ENCODE measurements at regions of chr15 and their contacts with region 1.

Region 1: DNA sequence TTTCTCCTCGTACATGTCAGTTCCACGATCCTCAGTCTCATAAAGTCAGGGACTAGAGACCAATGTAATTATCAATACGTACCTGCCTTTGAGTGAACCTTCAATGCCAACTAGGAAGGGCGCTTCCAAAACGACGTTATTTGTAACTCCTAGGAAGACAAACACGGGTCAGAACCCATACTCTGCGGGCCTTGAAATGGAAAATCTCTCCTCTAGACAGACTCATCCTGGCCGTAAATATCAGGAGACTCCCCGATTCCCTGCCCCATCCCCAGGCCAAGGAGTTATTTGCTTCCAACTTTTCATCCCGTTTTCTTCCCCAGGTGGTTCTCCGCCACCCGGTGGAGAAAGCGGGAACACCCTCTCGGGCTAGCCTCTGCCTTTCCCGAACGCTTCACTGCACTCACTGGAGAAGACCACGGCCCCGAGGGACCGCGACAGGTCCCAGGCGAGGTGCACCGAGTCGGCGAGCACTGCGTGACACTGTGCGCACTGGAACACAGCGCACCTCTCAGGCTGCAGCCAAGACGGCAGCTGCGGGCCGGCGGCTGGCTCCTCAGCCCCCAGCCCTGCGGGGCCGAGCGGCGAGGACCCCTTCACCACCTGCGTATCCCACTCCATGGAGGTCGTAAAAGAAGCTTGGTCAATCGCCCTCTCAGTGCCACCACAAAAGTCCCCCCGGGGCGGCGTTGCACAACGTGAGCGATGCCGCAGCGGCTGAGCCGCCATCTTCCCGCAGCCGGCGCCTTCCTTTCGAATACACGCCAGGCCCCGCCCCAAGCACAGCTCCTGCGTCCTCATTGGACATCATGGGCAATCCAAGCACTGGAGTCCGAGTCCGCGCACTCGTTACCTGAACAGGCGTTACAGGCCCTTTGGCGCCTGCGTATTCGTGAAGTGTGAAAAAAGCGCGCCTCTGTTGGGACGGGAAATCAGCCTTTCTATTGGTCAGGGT is at the start of gene OIP5:
- DNase-seq: peak; percentile 98
- H3K4me3 Mint-ChIP-seq: peak within 1 kb of the TSS; percentile 94
- H3K27ac Mint-ChIP-seq: peak within 1 kb of the TSS; percentile 95
- H3K4me1 Mint-ChIP-seq: peaks cover 33% of the 10 kb centered on the region
- H3K27me3 Mint-ChIP-seq: no peaks in the 10 kb centered on the region
- total RNA-seq, gene OIP5: 15.6 and 17.6 TPM in 2 replicates

Region 2: GRCh38 chr15:40906091-40906990 is 425.8 kb before region 1 on chr15:
- intact Hi-C with region 1: loop called (anchors 1 kb)
- DNase-seq: peak; percentile 55
- H3K4me3 Mint-ChIP-seq: no peak overlapping the region
- H3K27ac Mint-ChIP-seq: no peak overlapping the region
- H3K4me1 Mint-ChIP-seq: peaks cover 21% of the 10 kb centered on the region
- H3K27me3 Mint-ChIP-seq: no peaks in the 10 kb centered on the region

Region 3: DNA sequence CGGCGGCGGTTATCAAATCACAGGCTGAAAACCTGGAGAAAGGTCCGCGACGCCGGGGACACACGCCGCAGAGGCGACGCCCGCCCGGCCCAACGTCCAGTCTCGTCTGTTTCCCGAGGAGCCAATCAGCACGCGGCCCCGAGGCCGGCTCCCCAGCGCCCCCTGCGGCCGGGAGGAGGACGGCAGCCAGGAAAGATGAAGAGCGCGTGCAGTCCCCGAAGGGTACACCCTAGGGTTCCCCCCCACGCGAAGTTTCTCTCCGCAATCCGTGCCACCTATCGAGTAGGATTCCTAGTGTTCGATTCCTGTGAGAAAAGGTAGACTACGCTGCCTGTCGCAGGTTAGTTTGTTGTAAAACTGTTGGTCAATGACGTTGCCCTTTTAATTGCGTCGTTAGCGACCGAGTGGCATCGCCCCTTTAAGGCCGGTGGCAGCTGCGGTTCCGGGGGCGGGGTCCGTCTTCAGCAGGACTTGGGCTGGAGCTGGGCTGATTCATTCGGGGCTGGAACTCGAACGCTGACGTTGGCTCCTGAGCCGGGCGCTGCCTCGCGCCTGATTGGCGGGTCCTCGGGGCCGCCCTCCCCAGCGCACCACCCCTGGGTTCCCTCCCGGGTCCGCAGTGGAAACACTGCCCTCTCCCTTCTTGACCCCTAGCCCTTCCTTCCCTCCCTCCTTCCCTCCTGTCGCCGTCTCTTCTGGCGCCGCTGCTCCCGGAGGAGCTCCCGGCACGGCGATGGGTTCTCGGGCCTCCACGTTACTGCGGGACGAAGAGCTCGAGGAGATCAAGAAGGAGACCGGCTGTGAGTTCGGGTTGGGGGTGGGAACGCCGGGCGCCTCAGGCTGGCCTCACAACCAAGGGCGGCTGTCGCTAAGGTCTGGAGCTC is 101.2 kb before region 1 on chr15 and contains the starts of genes CHP1 and EXD1:
- intact Hi-C with region 1: loop called (anchors 1 kb)
- DNase-seq: peak; percentile 96
- H3K4me3 Mint-ChIP-seq: peak within 1 kb of the TSS; percentile 92
- H3K27ac Mint-ChIP-seq: peak within 1 kb of the TSS; percentile 89
- H3K4me1 Mint-ChIP-seq: peaks cover 23% of the 10 kb centered on the region
- H3K27me3 Mint-ChIP-seq: no peaks in the 10 kb centered on the region
- total RNA-seq, gene CHP1: 43.5 and 55.2 TPM in 2 replicates
- total RNA-seq, gene EXD1: not detected in 2 replicates

Region 4: DNA sequence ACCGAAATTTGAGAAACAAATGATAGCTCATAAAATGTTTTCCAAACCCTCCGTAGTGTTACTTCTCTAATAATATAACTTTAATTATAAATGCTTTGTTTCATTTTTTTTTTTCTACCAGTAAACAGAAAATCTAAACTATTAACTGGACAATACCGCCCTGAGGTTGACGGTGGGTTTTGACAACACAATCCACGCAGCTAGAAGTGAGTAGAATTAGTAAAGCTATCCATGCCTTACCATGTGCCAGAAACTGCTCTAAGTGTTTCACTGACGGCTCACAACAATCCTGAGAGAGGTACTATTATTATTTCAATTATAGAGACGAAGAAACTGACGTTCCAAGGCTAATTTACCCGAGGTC is 69.8 kb after region 1 on chr15:
- intact Hi-C with region 1: loop called (anchors 2 kb)
- DNase-seq: no peak
- H3K4me3 Mint-ChIP-seq: peak overlapping the region; percentile 89
- H3K27ac Mint-ChIP-seq: peak overlapping the region; percentile 87
- H3K4me1 Mint-ChIP-seq: peaks cover 13% of the 10 kb centered on the region
- H3K27me3 Mint-ChIP-seq: no peaks in the 10 kb centered on the region

Measured in activated T-helper 1 cell treated with anti-CD3 and anti-CD28 coated beads, Interleukin-12 subunit alpha, Interleukin-12 subunit beta, Interleukin-2, Interleukin-4 antibody, amounts not matched to agents 30 ng/mL and 10 ng/mL and 1 ng/mL, durations not matched to agents 14 hours and 24 hours and 36 hours (primary cell).